ENCODE measurements at regions of chr1 and their contacts with region 1.

Region 1: DNA sequence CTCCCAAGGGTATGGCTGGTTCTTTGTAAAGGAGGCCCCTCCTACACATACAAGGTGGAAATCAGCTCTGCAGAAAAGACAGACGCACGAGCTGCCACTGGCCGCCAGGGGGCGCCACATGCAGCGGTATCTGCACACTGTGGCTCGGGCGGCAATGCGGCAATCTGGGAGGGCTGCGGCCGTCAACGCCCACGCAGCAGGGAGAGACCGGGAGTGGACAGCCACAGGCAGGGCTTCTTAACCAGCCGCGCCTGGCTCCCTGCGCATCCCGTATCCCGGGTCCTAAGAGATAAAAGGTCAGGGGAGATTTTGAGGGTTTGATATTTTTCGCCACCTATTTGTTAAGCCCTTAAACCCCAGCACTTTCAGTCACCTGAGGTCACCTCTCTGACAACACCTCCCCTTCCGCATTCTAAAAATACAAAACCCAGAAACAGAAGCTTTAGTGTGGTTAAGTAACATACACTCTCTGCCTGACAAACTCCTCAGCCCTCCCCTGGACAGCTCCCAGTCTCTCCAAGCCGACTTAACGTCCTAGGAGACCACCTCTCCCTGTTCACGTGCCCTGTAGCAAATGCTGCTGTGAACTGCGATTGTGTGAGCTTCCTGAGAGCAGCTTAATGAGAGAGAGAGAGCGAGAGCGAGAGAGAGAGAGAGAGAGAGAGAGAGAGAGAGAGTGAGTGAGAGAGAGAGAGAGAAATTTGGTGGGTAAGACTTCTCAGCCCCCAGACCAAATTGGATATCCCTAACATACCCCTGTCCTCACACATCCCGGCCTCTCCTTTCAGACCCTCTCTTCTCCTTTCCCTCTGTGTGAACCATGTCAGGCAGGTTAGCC is 13.5 kb upstream of the KCNA2 start:
- DNase-seq: peak; percentile 84 to 96 (median 92)
- ATAC-seq: peak; percentile 95
- H3K4me3 ChIP-seq: peak overlapping the region; percentile 58
- H3K4me3 Mint-ChIP-seq: peak overlapping the region; percentile 81 to 96 (median 90)
- H3K27ac ChIP-seq: peak overlapping the region; percentile 54
- H3K27ac Mint-ChIP-seq: peak overlapping the region; percentile 89 to 95 (median 93)
- H3K4me1 ChIP-seq: peaks cover 16 to 30% of the 10 kb centered on the region in 2 donors
- H3K4me1 Mint-ChIP-seq: peaks cover 32 to 54% (median 42%) of the 10 kb centered on the region in 7 donors
- H3K27me3 ChIP-seq: no peaks in the 10 kb centered on the region
- H3K27me3 Mint-ChIP-seq: peaks cover 0 to 4% (median 0%) of the 10 kb centered on the region in 5 donors

Region 2: DNA sequence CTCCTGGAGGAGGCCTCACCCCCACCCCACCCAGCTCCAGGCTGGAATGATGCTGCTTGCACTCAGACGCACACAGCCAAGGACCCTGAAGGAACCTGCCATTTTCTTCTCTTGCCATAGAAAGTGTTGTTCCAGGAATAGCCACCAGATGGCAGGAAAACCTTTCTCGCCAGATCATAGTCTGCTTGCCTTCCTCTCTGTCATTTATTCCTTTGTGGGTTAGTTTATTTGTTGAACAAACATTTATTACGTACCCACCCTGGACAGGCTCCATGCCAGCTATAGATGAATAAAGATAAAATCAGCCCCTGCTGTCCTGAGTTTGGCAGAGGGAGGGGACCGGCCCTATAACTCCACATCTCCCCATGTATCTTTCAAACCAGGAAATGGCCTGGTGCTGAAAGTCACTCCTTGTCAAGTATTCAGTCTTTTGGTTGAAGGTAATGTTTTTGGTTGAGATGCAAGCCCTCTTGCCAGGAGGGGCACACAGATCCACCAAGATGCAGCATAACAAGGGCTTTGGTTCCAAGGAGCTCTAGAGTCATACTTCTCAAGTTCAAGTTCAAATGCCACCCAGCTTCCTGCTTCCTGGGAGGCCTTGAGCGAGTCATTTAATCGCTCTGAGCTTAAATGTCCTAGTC is 416.5 kb before region 1 on chr1:
- CTCF ChIA-PET with region 1: no interaction called
- POLR2A ChIA-PET with region 1: no interaction called
- intact Hi-C with region 1: loop called (anchors 5 kb)
- DNase-seq: peak; percentile 31 to 83 (median 74)
- ATAC-seq: peak; percentile 71
- H3K4me3 ChIP-seq: no peak overlapping the region
- H3K4me3 Mint-ChIP-seq: peak overlapping the region in 5 of 10 donors; percentile 1 to 26 (median 18)
- H3K27ac ChIP-seq: no peak overlapping the region
- H3K27ac Mint-ChIP-seq: peak overlapping the region; percentile 53 to 92 (median 87)
- H3K4me1 ChIP-seq: peaks cover 8 to 20% of the 10 kb centered on the region in 2 donors
- H3K4me1 Mint-ChIP-seq: peaks cover 13 to 32% (median 23%) of the 10 kb centered on the region in 7 donors
- H3K27me3 ChIP-seq: no peaks in the 10 kb centered on the region
- H3K27me3 Mint-ChIP-seq: no peaks in the 10 kb centered on the region

Region 3: DNA sequence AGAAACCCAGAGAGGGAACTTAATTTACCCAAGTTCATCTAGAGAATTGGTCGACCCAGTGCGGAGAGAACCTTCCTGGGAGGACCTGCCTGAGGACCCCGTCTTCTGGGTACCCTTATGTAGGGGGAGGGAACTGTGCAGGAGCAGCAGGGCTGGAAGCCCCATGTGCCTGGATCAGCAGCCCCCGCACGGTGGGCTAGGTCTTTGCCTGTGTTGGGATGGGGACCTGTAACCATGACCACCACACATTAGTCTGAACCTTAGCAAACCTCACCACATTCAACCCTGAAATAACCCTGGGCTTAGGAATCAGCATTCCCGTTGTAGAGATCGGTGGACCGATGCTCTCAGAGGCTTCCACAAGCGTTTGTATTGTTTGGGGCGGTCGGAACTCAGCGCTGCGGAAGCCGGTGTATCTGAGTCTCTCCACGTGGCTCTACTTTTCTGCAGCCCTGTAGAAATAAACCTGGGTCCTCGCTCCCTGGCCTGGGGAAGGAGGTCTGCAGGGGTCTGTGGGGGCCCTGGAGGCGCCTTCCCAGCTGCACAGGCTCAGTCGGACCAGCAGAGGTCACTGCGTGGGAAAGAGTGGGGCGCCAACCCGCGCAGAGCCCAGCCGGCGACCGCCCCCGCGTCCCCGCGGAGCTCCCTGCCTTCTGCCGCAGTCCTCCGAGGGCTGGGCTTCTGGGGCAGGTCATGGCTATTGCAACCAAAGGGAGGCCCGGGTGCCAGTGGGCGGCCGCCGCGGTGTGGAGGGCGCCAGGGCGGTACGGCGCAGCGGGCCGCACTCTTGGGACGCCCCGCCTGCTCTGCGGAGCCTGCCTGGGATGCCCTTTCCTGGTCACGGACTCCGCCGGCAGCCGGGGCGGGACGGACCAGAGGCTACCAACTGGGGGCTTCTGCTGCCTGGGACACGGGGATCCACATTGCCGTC is 64.5 kb before region 1 on chr1:
- CTCF ChIA-PET with region 1: interaction called, 10 read pairs
- POLR2A ChIA-PET with region 1: no interaction called
- intact Hi-C with region 1: loop called (anchors 1 kb)
- DNase-seq: peak; percentile 20 to 71 (median 54)
- ATAC-seq: peak; percentile 89
- H3K4me3 ChIP-seq: peak overlapping the region; percentile 25
- H3K4me3 Mint-ChIP-seq: peak overlapping the region in 9 of 10 donors; percentile 13 to 63 (median 31)
- H3K27ac ChIP-seq: no peak overlapping the region
- H3K27ac Mint-ChIP-seq: no peak overlapping the region
- H3K4me1 ChIP-seq: no peaks in the 10 kb centered on the region
- H3K4me1 Mint-ChIP-seq: peaks cover 0 to 8% (median 0%) of the 10 kb centered on the region in 7 donors
- H3K27me3 ChIP-seq: peaks cover 0 to 9% of the 10 kb centered on the region in 2 donors
- H3K27me3 Mint-ChIP-seq: peaks cover 47 to 72% (median 60%) of the 10 kb centered on the region in 5 donors

Region 4: DNA sequence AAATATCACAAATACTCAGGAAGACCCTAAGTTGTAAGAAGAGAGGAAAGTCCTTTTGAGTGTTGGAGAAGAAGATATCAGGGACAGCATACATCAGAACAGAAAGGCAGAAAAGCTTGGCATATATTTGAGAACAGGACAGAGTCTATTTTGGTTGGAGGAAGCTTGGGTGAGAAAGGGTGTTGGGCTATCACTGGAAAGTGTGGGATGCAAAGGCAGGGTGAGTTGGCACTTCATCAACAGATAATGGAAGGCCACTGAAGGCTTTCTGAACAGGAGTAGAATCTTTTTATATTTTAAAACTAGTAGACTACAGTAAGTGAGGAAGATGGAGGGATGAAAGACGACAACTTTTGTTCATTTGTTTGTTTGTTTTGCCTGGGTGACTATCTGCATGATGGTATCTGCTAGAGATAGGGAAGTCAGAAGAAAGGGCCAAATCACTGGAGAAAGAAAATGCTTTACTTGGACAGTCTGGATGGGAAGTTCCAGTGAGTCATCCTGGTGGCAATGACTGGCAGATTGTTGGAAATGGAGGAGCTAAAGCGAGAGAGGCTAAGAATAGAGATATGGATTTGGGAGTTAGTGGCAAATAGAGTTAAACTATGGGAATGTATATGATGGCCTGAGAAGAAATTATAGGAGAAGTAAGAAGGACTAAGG is 20.2 kb after region 1 on chr1:
- CTCF ChIA-PET with region 1: interaction called, 12 read pairs
- POLR2A ChIA-PET with region 1: interaction called, 7 read pairs
- intact Hi-C with region 1: loop called in 1 of 2 experiments (anchors 2 kb)
- DNase-seq: no peak
- ATAC-seq: peak; percentile 65
- H3K4me3 ChIP-seq: no peak overlapping the region
- H3K4me3 Mint-ChIP-seq: peak overlapping the region in 8 of 10 donors; percentile 1 to 46 (median 8)
- H3K27ac ChIP-seq: peak overlapping the region; percentile 13
- H3K27ac Mint-ChIP-seq: peak overlapping the region in 7 of 9 donors; percentile 56 to 92 (median 86)
- H3K4me1 ChIP-seq: peaks cover 81 to 98% of the 10 kb centered on the region in 2 donors
- H3K4me1 Mint-ChIP-seq: peaks cover 64 to 97% (median 85%) of the 10 kb centered on the region in 7 donors
- H3K27me3 ChIP-seq: no peaks in the 10 kb centered on the region
- H3K27me3 Mint-ChIP-seq: no peaks in the 10 kb centered on the region

Region 5: GRCh38 chr1:110766025-110766647 is 146.5 kb after region 1 on chr1:
- CTCF ChIA-PET with region 1: interaction called, 94 read pairs
- POLR2A ChIA-PET with region 1: interaction called, 21 read pairs
- intact Hi-C with region 1: loop called (anchors 1 kb)
- DNase-seq: peak in 7 of 9 donors; percentile 27 to 74 (median 61)
- ATAC-seq: peak; percentile 85
- H3K4me3 ChIP-seq: no peak overlapping the region
- H3K4me3 Mint-ChIP-seq: peak overlapping the region in 1 of 10 donors; percentile 21
- H3K27ac ChIP-seq: no peak overlapping the region
- H3K27ac Mint-ChIP-seq: no peak overlapping the region
- H3K4me1 ChIP-seq: no peaks in the 10 kb centered on the region
- H3K4me1 Mint-ChIP-seq: peaks cover 0 to 12% (median 5%) of the 10 kb centered on the region in 7 donors
- H3K27me3 ChIP-seq: no peaks in the 10 kb centered on the region
- H3K27me3 Mint-ChIP-seq: peaks cover 0 to 52% (median 8%) of the 10 kb centered on the region in 5 donors

Region 6: DNA sequence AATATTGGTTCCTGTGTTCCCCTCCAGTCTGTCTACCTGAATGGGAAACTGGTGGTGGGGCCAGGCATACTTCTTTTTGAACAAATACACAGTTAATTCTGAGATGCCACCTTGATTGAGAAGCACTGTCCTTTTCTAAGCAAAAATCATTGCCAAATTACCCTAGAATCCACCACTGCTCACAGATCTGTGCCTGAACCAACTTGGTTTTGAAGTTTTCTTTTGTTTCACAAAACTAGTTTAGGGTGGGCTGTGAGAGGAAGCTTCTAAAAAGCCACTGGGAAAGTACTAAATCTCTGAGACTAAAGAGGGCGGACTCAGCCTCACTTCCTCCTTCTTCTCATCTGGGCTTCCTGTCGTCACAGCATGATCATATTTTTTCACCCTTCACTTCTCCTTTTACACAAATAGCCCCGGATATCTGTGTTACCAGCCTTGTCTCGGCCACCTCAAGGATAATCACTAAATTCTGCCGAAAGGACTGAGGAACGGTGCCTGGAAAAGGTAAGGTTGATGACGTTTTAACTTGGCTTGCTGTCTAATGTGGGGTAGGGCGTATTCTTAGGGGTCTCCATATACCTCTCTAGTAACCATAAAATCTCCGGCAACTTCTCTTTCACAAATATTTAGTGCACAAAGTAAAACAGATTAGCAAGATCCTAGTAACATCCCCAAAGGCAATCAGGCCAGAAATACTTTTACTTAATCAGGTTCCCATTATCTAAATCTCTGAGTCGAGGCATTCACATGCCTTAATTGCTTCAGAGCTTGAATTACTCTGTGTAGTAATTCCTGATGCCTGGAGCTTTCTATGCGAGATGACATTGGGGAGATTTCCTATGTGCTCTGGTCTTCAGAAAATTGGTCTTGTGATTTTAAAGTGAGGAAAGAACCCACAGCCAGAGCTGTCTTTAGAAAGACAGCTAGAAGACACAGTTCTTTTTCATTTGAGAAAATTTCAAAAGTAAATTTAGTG is 253.4 kb after region 1 on chr1 and contains the start of gene CD53:
- CTCF ChIA-PET with region 1: interaction called, 3 read pairs
- POLR2A ChIA-PET with region 1: interaction called, 5 read pairs
- intact Hi-C with region 1: loop called in 1 of 2 experiments (anchors 2 kb)
- DNase-seq: peak in 8 of 9 donors; percentile 19 to 82 (median 76)
- ATAC-seq: peak; percentile 86
- H3K4me3 ChIP-seq: peak within 1 kb of the TSS; percentile 84
- H3K4me3 Mint-ChIP-seq: peak within 1 kb of the TSS; percentile 94 to 100 (median 96)
- H3K27ac ChIP-seq: peak within 1 kb of the TSS; percentile 91
- H3K27ac Mint-ChIP-seq: peak within 1 kb of the TSS; percentile 95 to 99 (median 98)
- H3K4me1 ChIP-seq: peaks cover 24 to 48% of the 10 kb centered on the region in 2 donors
- H3K4me1 Mint-ChIP-seq: peaks cover 34 to 72% (median 52%) of the 10 kb centered on the region in 7 donors
- H3K27me3 ChIP-seq: no peaks in the 10 kb centered on the region
- H3K27me3 Mint-ChIP-seq: no peaks in the 10 kb centered on the region
- total RNA-seq, gene CD53: 237 to 513 (median 287) TPM